A673 (cell line): ENCODE measurements at regions of chr13 and their contacts with region 1.

Region 1: DNA sequence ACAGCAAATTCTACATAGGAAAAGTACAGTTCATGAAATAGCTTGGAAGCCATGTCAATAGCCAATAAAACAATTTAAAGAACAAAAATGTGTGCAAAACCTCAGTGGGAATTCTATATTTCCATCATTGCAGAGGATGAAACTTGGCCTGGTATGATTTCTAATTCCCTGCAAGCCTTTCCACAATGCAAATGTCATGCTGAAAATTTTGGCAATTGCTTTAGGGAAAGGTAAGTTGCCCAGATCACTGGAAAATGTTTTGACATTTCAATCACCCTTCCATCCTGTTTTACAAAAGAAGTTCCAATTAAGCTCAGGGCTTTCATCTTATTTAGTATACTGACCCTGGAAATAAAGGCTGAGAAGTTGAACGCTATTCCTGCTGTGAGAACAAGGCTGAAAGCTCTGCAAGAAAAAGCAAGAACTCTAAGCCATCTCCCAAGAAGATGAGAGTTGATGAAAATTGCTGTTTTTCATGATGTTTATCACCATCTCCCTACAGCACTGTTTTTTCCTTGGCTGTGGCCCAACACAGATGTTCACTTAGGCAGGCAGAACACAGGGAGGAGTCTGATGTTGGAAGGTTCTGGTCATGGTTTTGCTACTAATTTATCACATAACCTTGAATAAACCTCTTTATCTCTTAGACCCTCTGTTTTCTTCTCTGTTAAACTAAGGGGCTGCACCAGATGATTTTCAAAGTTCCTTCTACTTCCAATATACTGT is 263.7 kb downstream of the KCTD12 start:
- DNase-seq: no peak
- H3K4me3 ChIP-seq: no peak overlapping the region
- H3K27ac ChIP-seq: no peak overlapping the region
- H3K4me1 ChIP-seq: no peaks in the 10 kb centered on the region
- H3K27me3 ChIP-seq: no peaks in the 10 kb centered on the region
- CTCF ChIP-seq: no peak

Region 2: DNA sequence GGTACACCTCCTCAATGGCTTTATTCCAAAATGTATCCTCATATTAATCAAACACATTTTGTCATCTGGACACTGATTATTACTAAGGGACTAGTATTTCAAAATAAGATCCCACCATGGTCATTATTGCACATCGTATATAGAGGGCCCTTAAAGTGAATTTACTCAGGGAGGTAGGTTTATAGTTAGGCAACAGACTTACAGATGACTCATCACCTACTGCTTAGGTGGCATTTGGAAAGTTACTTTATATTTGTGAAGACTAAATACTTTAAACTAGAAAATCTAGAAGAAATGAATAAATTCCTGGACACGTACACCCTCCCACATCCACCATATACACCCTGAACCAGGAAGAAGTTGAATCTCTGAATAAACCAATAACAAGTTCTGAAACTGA is 89.2 kb before region 1 on chr13:
- CTCF ChIA-PET with region 1: no interaction called
- POLR2A ChIA-PET with region 1: interaction called, 14 read pairs
- intact Hi-C with region 1: no loop called
- DNase-seq: no peak
- H3K4me3 ChIP-seq: no peak overlapping the region
- H3K27ac ChIP-seq: no peak overlapping the region
- H3K4me1 ChIP-seq: no peaks in the 10 kb centered on the region
- H3K27me3 ChIP-seq: peaks cover 5% of the 10 kb centered on the region
- CTCF ChIP-seq: no peak